Adrenal gland (tissue), 19 donors: ENCODE measurements at regions of chr3 and their contacts with region 1.

Region 1: GRCh38 chr3:73508330-73508954 is 116.3 kb downstream of the PDZRN3 start:
- DNase-seq: peak; percentile 50 to 70 (median 65)
- H3K4me3 ChIP-seq: no peak overlapping the region
- H3K27ac ChIP-seq: no peak overlapping the region
- H3K4me1 ChIP-seq: peaks cover 5 to 25% of the 10 kb centered on the region in 2 donors
- H3K27me3 ChIP-seq: no peaks in the 10 kb centered on the region
- CTCF ChIP-seq: peak; percentile 60 to 76 (median 70)
- POLR2A ChIP-seq: no peak

Region 2: GRCh38 chr3:73115806-73116205 is 392.6 kb before region 1 on chr3:
- intact Hi-C with region 1: no loop called
- DNase-seq: no peak
- H3K4me3 ChIP-seq: no peak overlapping the region
- H3K27ac ChIP-seq: no peak overlapping the region
- H3K4me1 ChIP-seq: no peaks in the 10 kb centered on the region
- H3K27me3 ChIP-seq: no peaks in the 10 kb centered on the region
- CTCF ChIP-seq: no peak
- POLR2A ChIP-seq: no peak

Region 3: GRCh38 chr3:73624821-73625665 is 116.6 kb after region 1 on chr3 and contains the start of gene PDZRN3:
- intact Hi-C with region 1: loop called in 1 of 2 experiments (anchors 10 kb)
- DNase-seq: peak; percentile 58 to 79 (median 74)
- H3K4me3 ChIP-seq: peak within 1 kb of the TSS; percentile 7 to 70 (median 56)
- H3K27ac ChIP-seq: peak within 1 kb of the TSS; percentile 26 to 86 (median 72)
- H3K4me1 ChIP-seq: peaks cover 9 to 24% of the 10 kb centered on the region in 2 donors
- H3K27me3 ChIP-seq: no peaks in the 10 kb centered on the region
- CTCF ChIP-seq: peak in 1 of 6 experiments; percentile 28
- POLR2A ChIP-seq: peak in 1 of 2 donors; percentile 81
- total RNA-seq, gene PDZRN3: 11.5 to 126 (median 69.8) TPM

Region 4: GRCh38 chr3:73773233-73773632 is 264.8 kb after region 1 on chr3:
- intact Hi-C with region 1: loop called in 1 of 2 experiments (anchors 5 kb)
- DNase-seq: peak in 1 of 7 donors; percentile 30
- H3K4me3 ChIP-seq: no peak overlapping the region
- H3K27ac ChIP-seq: no peak overlapping the region
- H3K4me1 ChIP-seq: peaks cover 0 to 5% of the 10 kb centered on the region in 2 donors
- H3K27me3 ChIP-seq: no peaks in the 10 kb centered on the region
- CTCF ChIP-seq: no peak
- POLR2A ChIP-seq: no peak

Region 5: DNA sequence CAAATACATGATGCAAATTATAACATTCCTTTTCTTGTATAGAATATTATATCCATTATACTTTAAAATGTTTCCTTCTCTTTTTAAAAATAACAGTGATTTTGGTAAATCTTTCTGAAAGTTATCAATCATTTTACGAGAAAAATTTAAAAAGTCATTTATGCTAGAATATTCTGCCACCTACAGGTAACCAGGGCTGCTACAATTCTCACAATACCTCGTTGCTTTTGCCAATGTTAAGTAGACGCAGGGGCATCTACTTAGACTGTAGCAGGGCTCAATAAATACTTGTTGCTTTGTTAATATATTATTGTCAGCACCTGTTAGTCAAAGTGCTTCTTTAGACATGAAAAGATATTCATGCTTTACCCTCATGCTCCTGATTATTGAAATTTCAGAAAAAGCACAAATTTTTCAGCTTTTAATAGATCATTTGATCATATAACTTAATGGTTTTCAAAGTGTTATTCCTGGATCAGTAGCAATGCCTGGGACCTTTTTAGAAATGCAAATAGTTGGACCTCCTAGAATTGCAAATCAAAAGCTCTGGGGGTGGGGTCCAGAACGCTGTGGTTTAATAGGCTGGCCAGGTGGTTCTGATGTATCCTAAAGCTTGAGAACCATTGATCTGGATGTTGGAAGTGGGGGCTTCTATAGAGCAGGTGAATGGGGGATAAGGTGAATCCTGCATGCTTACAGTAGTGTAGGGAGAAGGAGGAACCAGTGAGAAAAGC is 339.9 kb after region 1 on chr3:
- intact Hi-C with region 1: loop called (anchors 5 kb)
- DNase-seq: peak in 2 of 7 donors; percentile 11 to 25
- H3K4me3 ChIP-seq: no peak overlapping the region
- H3K27ac ChIP-seq: no peak overlapping the region
- H3K4me1 ChIP-seq: no peaks in the 10 kb centered on the region
- H3K27me3 ChIP-seq: no peaks in the 10 kb centered on the region
- CTCF ChIP-seq: peak; percentile 38 to 76 (median 72)
- POLR2A ChIP-seq: no peak

Region 6: DNA sequence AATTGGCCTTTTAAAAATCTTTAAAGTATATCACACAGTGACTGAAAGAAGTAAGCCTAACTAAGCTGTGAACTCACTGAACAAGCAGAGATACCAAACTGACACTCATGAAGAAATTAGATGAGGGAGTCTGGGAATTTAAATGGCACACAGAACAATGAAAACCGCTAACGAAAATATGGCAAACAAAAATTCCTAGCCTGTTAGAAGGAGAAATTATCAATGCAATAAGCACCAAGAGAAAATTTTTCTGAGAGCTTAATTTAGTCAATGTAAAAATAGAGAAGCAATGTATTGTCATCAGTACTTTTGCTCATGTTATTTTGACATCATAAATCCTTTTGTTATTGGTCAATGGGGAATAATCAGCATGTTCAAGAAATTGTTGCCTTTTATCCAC is 407.4 kb after region 1 on chr3:
- intact Hi-C with region 1: no loop called
- DNase-seq: no peak
- H3K4me3 ChIP-seq: no peak overlapping the region
- H3K27ac ChIP-seq: no peak overlapping the region
- H3K4me1 ChIP-seq: no peaks in the 10 kb centered on the region
- H3K27me3 ChIP-seq: no peaks in the 10 kb centered on the region
- CTCF ChIP-seq: no peak
- POLR2A ChIP-seq: no peak